ENCODE measurements at regions of chr13 and their contacts with region 1.

Region 1: DNA sequence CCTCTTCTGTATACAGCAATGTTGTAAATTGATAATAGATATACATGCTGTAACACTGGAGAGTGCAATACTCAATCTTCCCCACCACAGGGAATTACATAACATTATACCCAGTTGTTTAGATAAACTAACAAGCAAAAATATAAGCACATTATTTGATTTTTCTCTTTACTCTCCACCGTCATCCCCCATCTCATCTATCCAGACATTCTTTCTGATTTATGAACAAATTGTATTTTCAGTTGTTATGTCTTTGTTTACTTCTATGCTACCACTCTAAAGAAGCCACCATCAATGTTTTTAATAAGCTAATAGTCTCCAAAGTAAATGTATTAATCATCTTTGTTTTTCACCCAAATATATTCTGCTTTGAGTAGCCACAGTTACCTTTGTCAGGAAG is 490.7 kb upstream of the GPC6 start:
- DNase-seq: no peak
- H3K4me3 Mint-ChIP-seq: no peak overlapping the region
- H3K27ac Mint-ChIP-seq: no peak overlapping the region
- H3K4me1 Mint-ChIP-seq: no peaks in the 10 kb centered on the region
- H3K27me3 Mint-ChIP-seq: no peaks in the 10 kb centered on the region

Region 2: DNA sequence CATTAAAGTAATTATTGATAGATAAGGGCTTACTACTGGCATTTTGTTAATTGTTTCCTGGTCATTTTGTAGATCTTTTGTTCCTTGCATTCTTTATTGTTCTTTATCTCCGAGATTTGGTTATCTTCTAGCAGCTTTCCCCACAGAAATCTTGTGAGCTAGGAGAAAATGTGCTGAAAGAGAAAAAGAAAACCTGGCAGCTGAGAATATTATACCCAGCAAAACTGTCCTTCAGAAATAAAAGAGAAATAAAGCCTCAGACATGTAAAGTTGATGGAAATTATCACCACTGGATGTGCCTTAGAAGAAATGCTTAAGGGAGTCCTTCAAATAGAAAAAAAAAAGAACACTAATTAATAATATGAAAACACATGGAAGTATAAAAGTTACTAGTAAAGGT is 25.8 kb after region 1 on chr13:
- intact Hi-C with region 1: loop called (anchors 1 kb)
- DNase-seq: no peak
- H3K4me3 Mint-ChIP-seq: no peak overlapping the region
- H3K27ac Mint-ChIP-seq: no peak overlapping the region
- H3K4me1 Mint-ChIP-seq: no peaks in the 10 kb centered on the region
- H3K27me3 Mint-ChIP-seq: no peaks in the 10 kb centered on the region